Activated CD4-positive, alpha-beta T cell treated with anti-CD3 and anti-CD28 coated beads, Interleukin-2, amount 10 ng/mL, durations not matched to agents 7 days and 5 days (primary cell): ENCODE measurements at regions of chr14 and their contacts with region 1.

Region 1: DNA sequence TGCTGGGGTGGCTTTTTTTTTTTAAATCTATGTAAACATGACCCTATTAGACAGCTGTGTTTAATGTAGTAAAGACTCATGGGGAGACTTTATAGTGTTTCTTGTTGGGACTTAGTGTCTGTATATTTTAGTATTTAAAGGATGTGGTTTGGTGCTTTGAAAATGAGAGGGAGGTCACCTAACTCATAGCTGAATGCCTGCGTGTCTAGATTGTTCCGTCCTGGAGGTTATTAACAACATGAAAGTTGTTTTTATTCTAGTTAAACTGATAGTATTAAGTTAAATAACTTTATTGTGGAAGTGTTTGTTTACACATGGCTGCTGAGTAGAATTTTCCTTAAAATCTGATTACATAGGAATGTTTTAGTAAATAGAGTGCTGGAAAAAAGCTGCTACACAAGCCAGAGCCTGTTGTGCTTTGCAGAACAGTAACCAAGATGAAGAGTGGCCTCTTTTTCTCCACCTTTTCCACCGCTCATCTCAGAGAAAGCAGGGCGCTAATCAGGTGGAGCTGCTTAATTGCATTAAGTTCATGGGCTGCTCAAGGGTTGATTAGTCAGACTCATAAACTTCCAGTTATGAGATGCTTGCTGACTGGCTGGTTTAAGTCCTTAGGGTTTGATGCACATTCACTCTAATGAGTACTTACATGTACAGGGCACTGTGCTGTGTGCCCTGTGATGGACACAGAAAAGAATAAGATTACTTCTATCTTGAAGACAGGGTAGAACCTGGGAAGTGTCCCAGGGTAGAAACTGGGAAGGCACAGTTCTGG is 62.7 kb downstream of the FBXO34 start:
- DNase-seq: no peak
- H3K4me3 Mint-ChIP-seq: peak overlapping the region; percentile 51
- H3K27ac Mint-ChIP-seq: peak overlapping the region; percentile 90
- H3K4me1 Mint-ChIP-seq: peaks cover 74% of the 10 kb centered on the region
- H3K27me3 Mint-ChIP-seq: no peaks in the 10 kb centered on the region

Region 2: DNA sequence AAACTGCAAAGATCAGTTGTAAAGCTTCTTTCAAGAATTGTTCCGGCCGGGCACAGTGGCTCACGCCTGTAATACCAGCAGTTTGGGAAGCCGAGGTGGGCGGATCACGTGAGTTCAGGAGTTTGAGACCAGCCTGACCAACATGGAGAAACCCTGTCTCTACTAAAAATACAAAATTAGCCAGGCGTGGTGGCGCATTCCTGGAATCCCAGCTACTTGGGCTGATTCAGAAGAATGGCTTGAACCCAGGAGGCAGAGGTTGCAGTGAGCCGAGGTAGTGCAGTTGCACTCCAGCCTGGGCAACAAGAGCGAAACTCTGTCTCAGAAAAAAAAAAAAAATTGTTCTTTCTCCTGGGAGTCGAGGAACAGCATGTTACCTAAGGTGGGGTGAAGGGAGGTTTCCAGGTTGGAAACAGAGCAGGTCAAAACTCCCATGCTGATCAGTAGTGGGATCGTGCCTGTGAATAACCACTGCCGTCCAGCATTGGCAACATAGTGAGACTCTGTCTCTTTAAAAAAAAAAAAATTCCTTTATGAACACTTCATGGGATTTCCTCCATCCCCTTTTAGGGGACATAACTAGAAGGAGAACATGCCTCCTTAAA is 48.7 kb before region 1 on chr14:
- CTCF ChIA-PET with region 1: no interaction called
- POLR2A ChIA-PET with region 1: no interaction called
- DNase-seq: no peak
- H3K4me3 Mint-ChIP-seq: no peak overlapping the region
- H3K27ac Mint-ChIP-seq: no peak overlapping the region
- H3K4me1 Mint-ChIP-seq: peaks cover 16% of the 10 kb centered on the region
- H3K27me3 Mint-ChIP-seq: no peaks in the 10 kb centered on the region

Region 3: DNA sequence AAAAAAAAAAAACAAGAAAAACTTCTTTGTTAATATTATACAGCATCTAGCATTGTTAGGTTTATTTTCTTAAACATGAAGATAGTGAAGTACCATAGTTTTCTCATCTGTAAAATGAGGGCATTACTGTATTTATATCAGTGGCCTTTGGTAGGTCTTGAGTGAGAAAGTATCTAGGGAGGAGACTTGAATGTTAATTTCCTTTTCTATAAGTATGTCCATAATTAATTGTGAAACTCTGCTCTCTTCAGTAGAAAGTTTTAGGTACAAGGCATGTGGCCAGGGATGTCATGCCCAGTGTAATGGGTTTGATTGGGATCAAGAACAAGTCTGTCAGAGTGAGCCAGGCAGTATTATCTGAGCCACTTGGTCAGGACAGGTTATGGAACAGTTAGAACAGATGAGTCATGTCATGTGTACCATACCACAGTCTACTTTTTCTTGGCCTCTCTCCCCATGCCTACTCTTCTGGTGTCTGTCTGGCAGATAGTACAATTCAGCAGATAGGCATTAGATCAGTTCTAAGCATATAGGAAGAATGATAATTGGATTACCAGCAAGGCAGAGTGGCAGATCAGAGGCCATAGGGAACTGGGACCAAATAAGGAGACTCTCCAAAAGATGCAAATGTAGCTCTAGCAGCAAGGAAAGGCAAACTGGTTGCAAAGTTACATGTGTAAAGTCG is 32.3 kb before region 1 on chr14:
- CTCF ChIA-PET with region 1: interaction called, 4 read pairs
- POLR2A ChIA-PET with region 1: interaction called, 13 read pairs
- DNase-seq: no peak
- H3K4me3 Mint-ChIP-seq: no peak overlapping the region
- H3K27ac Mint-ChIP-seq: no peak overlapping the region
- H3K4me1 Mint-ChIP-seq: peaks cover 44% of the 10 kb centered on the region
- H3K27me3 Mint-ChIP-seq: no peaks in the 10 kb centered on the region